Calu3 (cell line): ENCODE measurements at regions of chr2 and their contacts with region 1.

Region 1: DNA sequence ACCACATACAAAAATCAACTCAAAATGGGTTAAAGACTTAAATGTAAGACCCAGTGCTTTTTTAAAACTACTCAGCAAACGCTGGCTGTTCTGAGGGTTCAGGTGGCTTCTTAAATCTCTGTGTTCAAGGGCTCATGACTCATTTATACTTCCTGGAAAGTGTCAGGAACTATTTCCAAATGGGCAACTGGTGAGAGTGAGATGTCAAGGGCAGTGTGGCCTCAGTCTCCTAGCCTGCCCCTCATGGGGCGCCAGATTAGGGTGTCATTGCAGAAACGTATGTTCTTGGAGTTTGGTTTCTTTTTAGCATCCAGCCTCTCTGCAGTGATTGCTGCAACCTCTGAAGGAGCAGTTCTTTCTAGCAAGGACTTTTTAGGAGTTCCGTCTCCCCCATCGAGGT is 485.4 kb downstream of the TNS1 start:
- DNase-seq: no peak
- H3K4me3 Mint-ChIP-seq: no peak overlapping the region
- H3K27ac Mint-ChIP-seq: no peak overlapping the region
- H3K4me1 Mint-ChIP-seq: peaks cover 10% of the 10 kb centered on the region
- H3K27me3 Mint-ChIP-seq: no peaks in the 10 kb centered on the region
- CTCF ChIP-seq: no peak

Region 2: GRCh38 chr2:217746808-217747207 is 229.4 kb after region 1 on chr2:
- CTCF ChIA-PET with region 1: no interaction called
- intact Hi-C with region 1: loop called (anchors 5 kb)
- DNase-seq: no peak
- H3K4me3 Mint-ChIP-seq: no peak overlapping the region
- H3K27ac Mint-ChIP-seq: no peak overlapping the region
- H3K4me1 Mint-ChIP-seq: no peaks in the 10 kb centered on the region
- H3K27me3 Mint-ChIP-seq: peaks cover 55% of the 10 kb centered on the region
- CTCF ChIP-seq: no peak

Region 3: GRCh38 chr2:217922101-217923006 is 405.0 kb after region 1 on chr2:
- CTCF ChIA-PET with region 1: no interaction called
- intact Hi-C with region 1: no loop called
- DNase-seq: no peak
- H3K4me3 Mint-ChIP-seq: no peak overlapping the region
- H3K27ac Mint-ChIP-seq: no peak overlapping the region
- H3K4me1 Mint-ChIP-seq: no peaks in the 10 kb centered on the region
- H3K27me3 Mint-ChIP-seq: peaks cover 82% of the 10 kb centered on the region
- CTCF ChIP-seq: peak; percentile 20